ENCODE measurements at regions of chr6 and their contacts with region 1.

Region 1: DNA sequence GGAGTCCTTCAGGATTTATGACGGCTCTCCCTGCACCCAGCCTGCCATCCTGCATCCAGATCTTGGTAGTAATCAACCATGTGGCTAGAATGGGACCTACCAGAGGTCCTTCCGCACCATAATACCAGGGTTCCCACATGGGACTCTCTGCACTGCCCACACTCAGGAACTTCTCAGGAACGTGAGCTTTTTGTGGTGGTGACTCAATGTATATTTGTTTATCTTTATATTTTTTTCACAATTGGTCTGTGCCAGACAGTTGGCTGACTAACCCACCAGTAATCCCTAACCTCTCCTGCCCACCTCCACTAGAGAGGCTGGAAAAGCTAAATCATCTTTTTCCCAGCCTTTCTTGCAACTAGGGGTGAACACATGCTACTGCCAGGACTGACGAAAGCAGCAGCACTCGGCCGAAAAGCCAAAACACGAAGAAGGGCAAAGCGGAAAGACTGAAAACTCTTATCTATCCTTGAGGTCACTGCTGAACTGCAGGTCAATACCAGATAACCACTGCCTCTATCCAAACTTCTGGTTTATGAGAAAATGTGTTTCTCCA is 113.0 kb downstream of the TRERF1 start:
- DNase-seq: peak; percentile 52
- H3K4me3 Mint-ChIP-seq: peak overlapping the region; percentile 47
- H3K27ac Mint-ChIP-seq: peak overlapping the region; percentile 84
- H3K4me1 Mint-ChIP-seq: peaks cover 79% of the 10 kb centered on the region
- H3K27me3 Mint-ChIP-seq: no peaks in the 10 kb centered on the region

Region 2: DNA sequence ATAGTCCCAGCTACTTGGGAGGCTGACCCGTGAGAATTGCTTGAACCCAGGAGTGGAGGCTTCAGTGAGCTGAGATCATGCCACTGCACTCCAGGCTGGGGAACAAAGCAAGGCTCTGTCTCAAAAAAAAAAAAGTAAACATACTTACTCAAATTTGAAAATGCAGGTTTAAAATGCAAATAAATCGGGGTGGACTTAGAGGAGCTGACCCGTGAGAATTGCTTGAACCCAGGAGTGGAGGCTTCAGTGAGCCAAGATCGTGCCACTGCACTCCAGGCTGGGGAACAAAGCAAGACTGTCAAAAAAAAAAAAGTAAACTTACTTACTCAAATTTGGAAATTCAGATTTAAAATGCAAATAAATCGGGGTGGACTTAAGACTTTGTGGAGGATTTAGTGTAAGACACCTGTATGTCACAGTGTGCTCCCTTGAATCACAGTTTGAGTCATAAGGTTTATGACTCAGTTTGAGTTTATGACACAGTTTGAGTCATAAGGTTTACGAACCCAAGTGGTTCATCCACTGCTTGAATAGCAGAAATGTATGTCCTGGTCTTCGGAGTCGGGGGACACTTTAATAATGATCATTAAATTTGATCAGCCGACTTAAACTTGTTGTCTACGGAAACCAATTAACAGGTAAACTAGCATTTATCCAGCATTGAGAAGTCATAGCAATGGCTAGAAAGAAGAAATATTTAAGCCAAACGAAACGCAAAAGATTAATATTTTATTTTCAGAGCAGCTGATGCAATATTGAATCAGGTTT is 114.3 kb before region 1 on chr6:
- CTCF ChIA-PET with region 1: no interaction called
- POLR2A ChIA-PET with region 1: interaction called, 3 read pairs
- intact Hi-C with region 1: loop called (anchors 1 kb)
- DNase-seq: peak; percentile 33
- H3K4me3 Mint-ChIP-seq: peak overlapping the region; percentile 54
- H3K27ac Mint-ChIP-seq: peak overlapping the region; percentile 80
- H3K4me1 Mint-ChIP-seq: peaks cover 21% of the 10 kb centered on the region
- H3K27me3 Mint-ChIP-seq: no peaks in the 10 kb centered on the region

Region 3: GRCh38 chr6:42292004-42292740 is 46.6 kb before region 1 on chr6:
- CTCF ChIA-PET with region 1: no interaction called
- POLR2A ChIA-PET with region 1: no interaction called
- intact Hi-C with region 1: loop called (anchors 2 kb)
- DNase-seq: peak; percentile 61
- H3K4me3 Mint-ChIP-seq: no peak overlapping the region
- H3K27ac Mint-ChIP-seq: peak overlapping the region; percentile 76
- H3K4me1 Mint-ChIP-seq: peaks cover 58% of the 10 kb centered on the region
- H3K27me3 Mint-ChIP-seq: no peaks in the 10 kb centered on the region

Region 4: GRCh38 chr6:42352856-42353564 is 14.3 kb after region 1 on chr6:
- CTCF ChIA-PET with region 1: interaction called, 3 read pairs
- POLR2A ChIA-PET with region 1: interaction called, 17 read pairs
- intact Hi-C with region 1: loop called (anchors 1 kb)
- DNase-seq: no peak
- H3K4me3 Mint-ChIP-seq: no peak overlapping the region
- H3K27ac Mint-ChIP-seq: no peak overlapping the region
- H3K4me1 Mint-ChIP-seq: peaks cover 18% of the 10 kb centered on the region
- H3K27me3 Mint-ChIP-seq: no peaks in the 10 kb centered on the region

Region 5: DNA sequence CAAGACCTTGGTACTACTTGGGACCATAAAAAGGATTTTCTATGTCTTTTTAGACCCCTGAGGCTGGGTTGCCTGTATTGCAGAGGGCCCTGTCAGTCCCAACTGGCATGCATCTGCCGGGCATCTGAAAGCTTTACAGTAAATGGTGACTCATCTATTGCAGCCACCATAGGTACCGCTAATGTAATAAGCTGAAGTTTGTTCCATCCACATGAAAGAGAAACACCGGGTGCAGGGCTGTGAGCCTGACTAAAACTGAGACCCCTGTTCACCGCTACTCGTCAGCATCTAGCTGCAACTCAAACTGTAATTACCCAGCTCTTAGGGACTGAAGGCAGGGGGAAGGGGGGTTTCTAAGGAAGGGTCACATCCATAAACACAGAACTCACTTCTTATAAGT is 63.4 kb after region 1 on chr6:
- CTCF ChIA-PET with region 1: interaction called, 6 read pairs
- POLR2A ChIA-PET with region 1: interaction called, 8 read pairs
- intact Hi-C with region 1: loop called (anchors 1 kb)
- DNase-seq: peak; percentile 85
- H3K4me3 Mint-ChIP-seq: no peak overlapping the region
- H3K27ac Mint-ChIP-seq: peak overlapping the region; percentile 76
- H3K4me1 Mint-ChIP-seq: peaks cover 81% of the 10 kb centered on the region
- H3K27me3 Mint-ChIP-seq: no peaks in the 10 kb centered on the region

Region 6: DNA sequence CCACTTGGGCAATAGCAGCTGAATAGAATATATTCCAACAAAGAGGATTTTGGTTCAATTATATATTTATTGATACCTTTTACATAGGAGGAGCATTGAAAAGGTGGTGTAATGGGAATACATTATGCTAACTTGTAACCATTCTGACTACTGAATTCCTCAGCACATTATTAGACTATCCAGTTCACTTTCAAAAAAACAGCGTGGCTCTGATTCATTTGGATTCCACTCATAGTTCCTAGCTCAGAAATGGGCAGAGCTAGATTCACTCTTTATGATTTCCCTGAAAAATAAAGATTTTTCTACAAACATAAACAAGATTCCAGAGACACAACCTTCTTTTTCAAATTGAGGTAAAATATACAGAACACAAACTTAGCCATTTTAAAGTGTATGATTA is 122.1 kb after region 1 on chr6:
- CTCF ChIA-PET with region 1: no interaction called
- POLR2A ChIA-PET with region 1: no interaction called
- intact Hi-C with region 1: no loop called
- DNase-seq: no peak
- H3K4me3 Mint-ChIP-seq: no peak overlapping the region
- H3K27ac Mint-ChIP-seq: no peak overlapping the region
- H3K4me1 Mint-ChIP-seq: no peaks in the 10 kb centered on the region
- H3K27me3 Mint-ChIP-seq: no peaks in the 10 kb centered on the region

Region 7: GRCh38 chr6:42520786-42521607 is 182.3 kb after region 1 on chr6:
- CTCF ChIA-PET with region 1: no interaction called
- POLR2A ChIA-PET with region 1: no interaction called
- intact Hi-C with region 1: loop called (anchors 1 kb)
- DNase-seq: peak; percentile 51
- H3K4me3 Mint-ChIP-seq: no peak overlapping the region
- H3K27ac Mint-ChIP-seq: peak overlapping the region; percentile 82
- H3K4me1 Mint-ChIP-seq: peaks cover 21% of the 10 kb centered on the region
- H3K27me3 Mint-ChIP-seq: peaks cover 1% of the 10 kb centered on the region